Dorsolateral prefrontal cortex (tissue), 120 donors: ENCODE measurements at regions of chr12 and their contacts with region 1.

Region 1: DNA sequence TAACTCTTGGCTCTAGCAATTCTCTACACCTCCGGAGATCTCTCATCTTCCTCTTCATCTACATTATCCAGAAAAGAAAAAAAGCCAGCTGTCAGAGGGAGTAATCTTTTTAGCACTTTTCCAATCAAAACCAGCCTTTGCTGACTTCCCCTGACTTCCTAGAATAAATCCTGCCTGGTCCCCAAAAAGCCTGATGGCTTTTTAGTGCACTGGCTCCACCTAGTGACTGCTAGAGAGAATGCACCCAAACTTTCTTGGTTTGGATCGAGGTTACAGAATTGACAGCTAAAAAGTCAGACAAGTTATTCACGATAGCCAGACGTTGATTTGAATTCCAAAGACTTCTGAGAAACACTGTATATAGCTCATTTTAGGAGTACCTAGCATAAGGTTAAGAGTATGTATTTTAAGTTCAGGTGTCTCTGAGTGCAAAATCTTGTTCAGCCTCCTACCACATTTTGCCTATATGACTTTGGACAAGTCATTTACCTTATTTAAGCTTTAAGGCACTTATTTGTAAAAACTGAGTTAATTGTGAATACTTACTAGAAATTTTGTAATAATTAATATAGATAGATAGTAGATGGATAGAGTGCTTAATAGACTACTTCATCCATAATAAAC is 185.7 kb upstream of the GRIN2B start:
- DNase-seq: peak in 7 of 10 donors; percentile 26 to 62 (median 48)
- H3K4me3 ChIP-seq: peak overlapping the region in 2 of 59 donors; percentile 10 to 19
- H3K27ac ChIP-seq: peak overlapping the region in 10 of 59 donors; percentile 2 to 57 (median 36)
- H3K27me3 ChIP-seq: no peaks in the 10 kb centered on the region
- CTCF ChIP-seq: peak; percentile 86 to 99 (median 94)

Region 2: DNA sequence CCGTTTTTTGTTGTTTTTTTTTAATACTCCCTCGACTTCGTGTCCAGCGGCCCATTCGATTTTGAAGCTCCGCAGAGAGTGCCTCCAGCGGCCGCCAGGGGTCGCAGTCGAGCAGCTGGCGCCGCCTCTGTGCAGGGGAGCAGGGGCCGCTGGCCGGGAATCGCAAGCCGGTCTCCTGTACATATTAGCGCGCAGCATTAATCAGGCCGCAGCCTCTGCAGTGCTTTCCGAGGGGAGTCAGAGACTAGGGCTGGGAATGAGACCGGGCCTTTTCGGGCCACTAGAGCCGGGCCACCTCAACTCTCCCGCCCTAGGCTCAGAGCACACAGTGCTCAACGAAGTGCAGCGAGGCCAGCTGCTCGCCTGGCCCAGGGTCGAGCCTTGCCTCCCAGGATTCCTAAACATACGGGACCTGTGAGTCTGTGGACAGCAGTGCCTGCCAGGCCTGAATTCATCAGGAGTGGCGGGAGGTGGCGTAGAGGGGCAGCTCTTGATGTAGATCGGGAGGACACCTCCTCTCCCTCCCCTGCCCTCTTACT is 888.8 kb before region 1 on chr12:
- intact Hi-C with region 1: loop called in 1 of 2 experiments (anchors 10 kb)
- DNase-seq: peak in 9 of 10 donors; percentile 63 to 87 (median 72)
- H3K4me3 ChIP-seq: peak overlapping the region in 38 of 59 donors; percentile 0 to 52 (median 25)
- H3K27ac ChIP-seq: peak overlapping the region in 27 of 59 donors; percentile 1 to 75 (median 44)
- H3K27me3 ChIP-seq: peaks cover 0 to 10% (median 0%) of the 10 kb centered on the region in 45 donors
- CTCF ChIP-seq: peak; percentile 90 to 99 (median 95)

Region 3: DNA sequence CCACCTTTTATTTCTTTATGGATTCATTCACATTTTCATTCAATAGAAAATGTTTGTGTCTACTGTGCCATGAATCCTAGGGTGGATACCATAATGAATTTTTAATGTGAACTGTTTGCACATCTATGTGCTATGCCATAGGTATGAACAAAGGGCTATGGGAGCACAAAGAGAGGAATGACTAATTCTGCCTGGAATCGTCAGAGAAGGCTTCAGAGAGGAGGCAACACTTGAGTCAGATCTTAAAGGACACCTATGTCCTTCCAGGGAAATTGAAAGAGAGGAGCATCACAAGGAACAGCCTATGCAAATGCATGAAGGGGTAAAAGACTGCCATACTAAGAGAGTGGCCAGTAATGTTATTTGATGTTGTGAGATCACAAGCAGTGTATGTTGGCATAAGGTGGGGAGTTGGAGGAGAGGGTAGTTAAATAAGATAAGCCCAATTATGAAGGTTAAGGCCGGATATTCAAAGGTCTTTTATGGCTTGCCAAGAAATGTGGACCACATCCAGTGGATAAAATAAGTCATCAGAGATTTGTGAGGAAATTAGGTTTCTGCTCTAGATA is 432.4 kb before region 1 on chr12:
- intact Hi-C with region 1: loop called (anchors 2 to 5 kb)
- DNase-seq: no peak
- H3K4me3 ChIP-seq: no peak overlapping the region
- H3K27ac ChIP-seq: no peak overlapping the region
- H3K27me3 ChIP-seq: no peaks in the 10 kb centered on the region
- CTCF ChIP-seq: no peak

Region 4: GRCh38 chr12:13744561-13744960 is 422.6 kb before region 1 on chr12:
- intact Hi-C with region 1: loop called (anchors 2 to 5 kb)
- DNase-seq: peak in 5 of 10 donors; percentile 10 to 71 (median 40)
- H3K4me3 ChIP-seq: peak overlapping the region in 24 of 59 donors; percentile 2 to 40 (median 18)
- H3K27ac ChIP-seq: peak overlapping the region in 28 of 59 donors; percentile 9 to 76 (median 46)
- H3K27me3 ChIP-seq: peaks cover 0 to 27% (median 0%) of the 10 kb centered on the region in 45 donors
- CTCF ChIP-seq: no peak

Region 5: DNA sequence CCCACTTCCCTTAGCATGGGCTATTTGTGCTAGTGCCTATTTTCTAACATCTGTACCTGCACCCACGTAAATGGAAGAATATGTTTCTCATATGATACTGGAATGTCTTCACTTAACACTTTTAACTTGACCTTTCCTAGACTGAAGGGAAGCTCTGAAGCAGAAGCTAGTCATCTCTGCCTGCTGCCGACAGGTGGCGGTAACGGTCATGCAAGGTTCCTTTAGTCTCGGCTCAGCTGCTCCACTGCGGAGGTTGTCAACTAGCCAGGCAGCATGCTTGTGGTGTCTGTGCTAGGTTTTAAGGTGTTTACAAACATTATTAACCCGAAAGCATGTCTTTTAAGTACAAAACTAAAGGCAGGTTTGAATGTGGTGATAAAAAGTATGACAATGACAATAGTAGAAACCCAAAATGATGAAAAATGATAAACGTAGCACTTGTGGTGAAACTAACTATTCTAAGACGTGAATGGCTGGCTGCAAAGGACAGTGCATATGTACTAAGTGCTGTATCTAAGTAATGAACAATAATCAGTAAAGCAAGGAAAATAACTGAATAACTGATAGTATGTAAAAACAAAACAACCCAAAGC is 302.9 kb before region 1 on chr12:
- intact Hi-C with region 1: loop called (anchors 2 to 5 kb)
- DNase-seq: peak; percentile 60 to 87 (median 80)
- H3K4me3 ChIP-seq: no peak overlapping the region
- H3K27ac ChIP-seq: no peak overlapping the region
- H3K27me3 ChIP-seq: peaks cover 0 to 13% (median 0%) of the 10 kb centered on the region in 45 donors
- CTCF ChIP-seq: peak; percentile 68 to 96 (median 89)

Region 6: DNA sequence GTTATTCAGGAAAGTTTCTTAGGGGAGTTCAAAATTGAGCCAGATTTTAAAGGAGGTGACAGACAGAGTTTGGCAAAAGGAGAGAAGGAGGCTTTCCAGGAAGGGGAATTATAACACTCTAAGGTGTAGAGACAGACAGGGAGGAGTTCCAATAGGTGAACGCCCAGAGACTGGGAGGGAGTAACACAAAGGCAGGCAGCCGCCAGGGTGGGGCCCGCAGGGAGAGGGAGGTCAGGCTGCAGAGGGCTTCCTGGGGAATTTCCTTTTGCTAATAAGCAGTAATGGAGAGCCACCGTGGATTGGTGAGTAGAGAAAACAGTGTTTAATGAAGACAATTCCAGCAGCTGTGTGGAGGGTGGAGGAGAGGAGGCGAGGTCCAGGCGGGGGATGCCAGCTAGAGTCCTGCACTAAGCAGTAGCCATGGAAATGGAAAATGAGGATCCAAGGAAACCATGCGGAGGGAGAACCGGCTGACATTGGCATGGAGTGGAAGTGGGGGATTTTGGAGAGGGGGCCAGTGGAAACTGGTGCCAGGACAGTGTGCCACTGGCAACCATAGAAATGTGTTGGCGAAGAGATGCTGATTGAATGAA is 207.9 kb before region 1 on chr12:
- intact Hi-C with region 1: loop called in 1 of 2 experiments (anchors 5 kb)
- DNase-seq: peak in 2 of 10 donors; percentile 50 to 62
- H3K4me3 ChIP-seq: peak overlapping the region in 12 of 59 donors; percentile 0 to 26 (median 10)
- H3K27ac ChIP-seq: peak overlapping the region in 33 of 59 donors; percentile 0 to 75 (median 35)
- H3K27me3 ChIP-seq: peaks cover 0 to 23% (median 0%) of the 10 kb centered on the region in 45 donors
- CTCF ChIP-seq: no peak

Region 7: GRCh38 chr12:13973996-13974395 is 193.1 kb before region 1 on chr12:
- intact Hi-C with region 1: loop called in 1 of 2 experiments (anchors 10 kb)
- DNase-seq: no peak
- H3K4me3 ChIP-seq: peak overlapping the region in 39 of 59 donors; percentile 1 to 75 (median 64)
- H3K27ac ChIP-seq: peak overlapping the region in 5 of 59 donors; percentile 0 to 39 (median 13)
- H3K27me3 ChIP-seq: peaks cover 0 to 7% (median 0%) of the 10 kb centered on the region in 45 donors
- CTCF ChIP-seq: no peak